ENCODE measurements at regions of chr12 and their contacts with region 1.

Region 1: GRCh38 chr12:14239350-14239934 is 126.0 kb upstream of the ATF7IP start:
- ATAC-seq: peak in 7 of 8 experiments; percentile 58 to 70 (median 63)
- H3K4me3 ChIP-seq: no peak overlapping the region
- H3K27ac ChIP-seq: no peak overlapping the region
- H3K4me1 ChIP-seq: peaks cover 7 to 12% of the 10 kb centered on the region in 2 donors

Region 2: DNA sequence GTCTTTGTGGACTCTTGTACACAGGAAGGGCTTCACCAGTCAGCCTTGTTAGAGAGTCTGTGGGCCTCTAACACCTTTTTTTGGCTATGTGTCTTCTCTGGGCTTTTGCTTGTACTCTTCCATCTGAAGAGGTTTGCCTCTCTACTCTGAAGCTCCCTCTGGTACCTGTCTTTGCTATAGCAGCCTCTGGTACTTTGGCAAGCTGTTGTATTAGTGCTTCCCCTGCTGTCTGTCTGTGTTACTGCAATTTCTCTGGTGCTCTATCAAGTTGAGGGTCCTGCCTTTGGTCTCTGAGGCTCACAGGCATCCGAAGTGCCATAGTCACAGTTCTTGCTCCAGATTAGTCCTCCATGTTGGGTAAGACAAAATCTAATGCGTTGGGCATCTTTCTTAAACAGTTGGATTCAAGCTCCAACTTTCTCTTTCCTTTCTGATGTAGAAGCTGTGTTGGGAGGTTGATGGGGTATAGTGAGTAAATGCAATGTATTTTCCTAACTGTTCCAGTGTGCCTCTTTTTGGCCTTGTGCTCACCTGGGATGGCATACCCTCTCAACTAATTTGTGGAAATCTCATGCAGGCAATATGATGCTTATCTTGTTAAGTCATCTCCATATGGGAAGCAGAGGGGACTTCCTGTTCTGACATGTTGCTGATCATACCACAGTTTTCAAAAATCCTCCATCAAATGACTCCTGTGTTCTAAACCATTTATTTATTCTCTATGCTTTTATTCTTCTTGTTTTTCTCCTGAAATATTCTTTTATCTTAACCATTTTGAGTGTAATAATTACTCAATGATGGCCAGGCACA is 214.9 kb after region 1 on chr12:
- in situ Hi-C with region 1: loop called in 1 of 9 experiments (anchors 25 kb)
- ATAC-seq: peak in 3 of 8 experiments; percentile 21 to 81 (median 38)
- H3K4me3 ChIP-seq: no peak overlapping the region
- H3K27ac ChIP-seq: no peak overlapping the region
- H3K4me1 ChIP-seq: no peaks in the 10 kb centered on the region

Region 3: GRCh38 chr12:14618983-14619382 is 379.5 kb after region 1 on chr12:
- in situ Hi-C with region 1: loop called in 1 of 9 experiments (anchors 25 kb)
- ATAC-seq: peak in 3 of 8 experiments; percentile 52 to 68 (median 62)
- H3K4me3 ChIP-seq: no peak overlapping the region
- H3K27ac ChIP-seq: no peak overlapping the region
- H3K4me1 ChIP-seq: no peaks in the 10 kb centered on the region

Region 4: DNA sequence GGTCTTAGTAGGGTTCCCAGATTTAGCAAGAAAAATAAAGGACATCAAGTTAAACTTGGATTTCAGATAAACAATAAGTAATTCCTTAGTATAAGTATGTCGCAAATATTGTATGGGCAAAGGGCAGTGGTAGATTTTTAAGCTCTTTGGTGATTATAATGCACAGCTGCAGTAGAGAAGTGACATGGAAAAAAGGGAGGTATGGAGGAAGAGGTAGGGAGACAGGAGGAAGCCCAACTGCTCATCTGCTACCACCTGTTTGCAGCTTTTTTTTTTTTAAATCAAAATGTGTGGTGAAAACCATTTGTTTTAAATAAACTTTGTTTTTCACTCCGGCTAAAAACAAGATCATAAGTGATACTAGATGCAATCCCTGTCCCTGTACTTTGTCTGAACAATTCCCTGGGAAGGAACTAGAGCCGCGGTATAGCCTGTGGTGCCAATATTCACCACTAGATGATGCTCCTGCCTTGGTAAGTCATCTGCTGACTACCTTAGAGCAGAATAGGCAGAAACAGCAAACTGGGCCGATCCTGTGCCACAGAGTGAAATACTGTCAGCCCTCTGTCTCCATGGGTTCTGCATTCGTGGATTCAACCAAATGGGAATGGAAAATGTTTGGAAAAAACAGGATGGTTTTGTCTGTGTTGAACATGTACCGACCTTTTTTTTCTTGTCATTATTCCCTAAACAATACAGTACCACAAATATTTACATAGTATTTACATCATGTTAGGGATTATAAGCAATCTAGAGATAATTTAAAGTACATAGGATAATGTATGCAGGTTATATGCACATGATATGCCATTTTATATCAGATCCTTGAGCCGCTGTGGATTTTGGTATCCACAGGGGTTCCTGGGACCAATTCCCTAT is 390.6 kb after region 1 on chr12:
- in situ Hi-C with region 1: loop called in 1 of 9 experiments (anchors 25 kb)
- ATAC-seq: peak; percentile 94 to 100 (median 100)
- H3K4me3 ChIP-seq: no peak overlapping the region
- H3K27ac ChIP-seq: no peak overlapping the region
- H3K4me1 ChIP-seq: no peaks in the 10 kb centered on the region

Region 5: DNA sequence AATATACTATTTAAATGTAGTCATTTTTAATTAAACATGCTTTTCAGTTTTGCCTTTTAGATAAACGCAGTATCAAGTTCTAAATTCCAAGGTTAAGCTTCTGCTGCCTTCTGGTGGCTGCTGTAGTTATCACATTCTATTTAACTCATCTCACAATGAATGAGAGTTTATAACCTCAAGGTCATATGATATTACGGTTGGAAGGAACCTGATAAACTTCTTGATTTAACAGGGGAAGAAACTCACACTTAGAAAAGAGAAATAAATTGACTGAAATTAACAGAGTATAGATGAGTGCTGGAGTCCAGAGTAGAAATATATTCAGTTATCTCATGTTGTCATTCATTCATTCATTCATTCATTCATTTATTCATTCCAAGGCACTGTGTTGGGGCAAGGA is 425.1 kb after region 1 on chr12:
- in situ Hi-C with region 1: loop called in 1 of 9 experiments (anchors 25 kb)
- ATAC-seq: peak in 2 of 8 experiments; percentile 40 to 41
- H3K4me3 ChIP-seq: no peak overlapping the region
- H3K27ac ChIP-seq: no peak overlapping the region
- H3K4me1 ChIP-seq: no peaks in the 10 kb centered on the region

Measured in motor neuron (in vitro differentiated cells).